Ascending aorta (tissue), 2 donors: ENCODE measurements at regions of chr1 and their contacts with region 1.

Region 1: GRCh38 chr1:156054500-156055280 is at the start of gene LAMTOR2:
- DNase-seq: peak; percentile 92 to 99
- H3K4me3 ChIP-seq: peak within 1 kb of the TSS; percentile 58 to 73
- H3K27ac ChIP-seq: peak within 1 kb of the TSS; percentile 85 to 96
- H3K4me1 ChIP-seq: peaks cover 0 to 8% of the 10 kb centered on the region in 2 donors
- H3K27me3 ChIP-seq: no peaks in the 10 kb centered on the region
- CTCF ChIP-seq: no peak
- total RNA-seq, gene LAMTOR2: 43.9 TPM

Region 2: GRCh38 chr1:156020292-156021089 is 34.2 kb before region 1 on chr1 and contains the start of gene SSR2:
- intact Hi-C with region 1: loop called (anchors 2 kb)
- DNase-seq: peak; percentile 68 to 95
- H3K4me3 ChIP-seq: peak within 1 kb of the TSS; percentile 90 to 93
- H3K27ac ChIP-seq: peak within 1 kb of the TSS; percentile 90 to 91
- H3K4me1 ChIP-seq: peaks cover 4 to 9% of the 10 kb centered on the region in 2 donors
- H3K27me3 ChIP-seq: no peaks in the 10 kb centered on the region
- CTCF ChIP-seq: no peak
- total RNA-seq, gene SSR2: 103 TPM